ENCODE measurements at regions of chr1 and their contacts with region 1.

Region 1: DNA sequence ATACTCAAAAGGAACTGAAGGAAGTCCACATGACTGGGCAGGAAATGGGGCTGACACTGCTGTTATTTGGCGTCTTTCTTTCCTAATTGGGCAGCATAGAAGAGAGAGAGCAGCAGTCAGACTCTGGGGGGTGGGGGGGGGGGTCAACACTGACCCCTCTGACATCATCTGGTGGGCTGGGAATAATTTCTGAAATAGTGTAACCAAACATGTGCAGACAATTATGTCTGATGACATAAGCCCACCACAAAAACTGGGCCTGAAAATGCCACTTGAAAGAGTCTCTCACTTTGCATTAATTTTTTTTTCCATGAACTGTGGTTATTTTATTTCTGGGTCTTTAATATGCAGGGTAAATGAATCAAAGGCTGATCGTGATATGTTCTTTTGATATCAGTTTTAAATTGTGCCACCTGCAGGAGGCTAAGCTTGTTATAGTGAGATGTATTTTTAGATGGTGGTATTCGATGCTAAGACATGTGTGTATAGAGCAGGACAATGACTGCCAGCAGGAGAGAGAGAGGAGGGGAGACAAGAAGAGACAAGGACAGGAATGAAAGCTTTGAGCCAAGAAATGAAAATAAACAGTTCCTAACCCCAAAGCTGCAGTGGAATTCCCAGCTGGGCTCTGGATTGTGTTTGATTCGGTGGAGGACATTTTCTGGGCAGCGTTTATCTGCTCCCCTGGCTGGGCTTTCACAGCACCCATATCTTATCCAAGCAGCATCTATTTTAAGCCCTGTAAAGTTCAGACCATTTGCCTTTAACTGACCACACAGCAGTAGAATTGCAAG is 264.7 kb downstream of the PBX1 start:
- DNase-seq: no peak
- H3K4me3 ChIP-seq: peak overlapping the region in 2 of 4 donors; percentile 8 to 15
- H3K27ac ChIP-seq: peak overlapping the region; percentile 76 to 82 (median 79)
- H3K4me1 ChIP-seq: peaks cover 24 to 69% (median 60%) of the 10 kb centered on the region in 4 donors
- H3K27me3 ChIP-seq: no peaks in the 10 kb centered on the region
- CTCF ChIP-seq: peak in 2 of 3 experiments; percentile 25 to 32
- EP300 ChIP-seq: no peak
- POLR2A ChIP-seq: no peak

Region 2: GRCh38 chr1:164868990-164869389 is 45.3 kb after region 1 on chr1:
- intact Hi-C with region 1: loop called (anchors 5 kb)
- DNase-seq: no peak
- H3K4me3 ChIP-seq: no peak overlapping the region
- H3K27ac ChIP-seq: no peak overlapping the region
- H3K4me1 ChIP-seq: peaks cover 0 to 14% (median 5%) of the 10 kb centered on the region in 4 donors
- H3K27me3 ChIP-seq: no peaks in the 10 kb centered on the region
- CTCF ChIP-seq: no peak
- EP300 ChIP-seq: no peak
- POLR2A ChIP-seq: no peak

Region 3: GRCh38 chr1:164886101-164886500 is 62.4 kb after region 1 on chr1:
- intact Hi-C with region 1: no loop called
- DNase-seq: no peak
- H3K4me3 ChIP-seq: no peak overlapping the region
- H3K27ac ChIP-seq: no peak overlapping the region
- H3K4me1 ChIP-seq: no peaks in the 10 kb centered on the region
- H3K27me3 ChIP-seq: no peaks in the 10 kb centered on the region
- CTCF ChIP-seq: no peak
- EP300 ChIP-seq: no peak
- POLR2A ChIP-seq: no peak